ENCODE measurements at regions of chr17 and their contacts with region 1.

Region 1: DNA sequence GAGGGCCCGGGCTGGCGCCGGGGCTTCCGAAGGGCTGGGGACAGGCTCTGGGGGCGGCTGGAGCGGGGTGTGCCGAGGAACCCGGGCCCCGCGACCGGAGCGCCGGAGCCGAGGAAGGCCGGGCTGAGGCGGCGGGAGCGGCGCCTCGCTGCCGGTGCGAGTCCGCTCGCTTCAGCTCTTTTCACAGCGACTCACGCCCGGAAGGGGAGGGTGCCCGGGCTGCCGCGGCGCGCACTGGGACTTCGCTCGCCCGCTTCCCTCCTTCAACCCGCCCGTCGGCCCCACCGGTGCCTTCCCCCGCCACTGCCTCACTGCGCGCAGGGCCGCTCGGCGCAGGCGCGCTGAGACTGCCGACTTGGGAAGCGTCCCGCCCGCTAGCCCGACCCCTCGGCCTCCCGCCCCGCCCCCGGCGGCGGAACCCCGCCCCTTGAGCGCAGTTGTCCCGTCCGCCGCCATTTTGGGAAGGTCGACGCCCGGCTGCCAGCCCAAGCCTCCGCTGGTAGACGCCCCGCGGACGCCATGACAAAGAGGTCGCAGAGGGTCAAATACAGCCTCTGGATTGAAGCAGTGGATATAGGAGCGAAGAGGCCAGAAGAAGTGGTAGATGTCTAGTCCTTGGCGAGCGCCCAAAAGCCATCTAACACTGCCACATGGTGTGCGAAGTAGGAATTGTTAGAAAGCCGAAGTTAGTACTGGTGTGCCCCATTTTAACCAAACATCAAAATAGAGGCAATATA is at the start of gene UBE2G1:
- DNase-seq: peak; percentile 97
- H3K4me3 Mint-ChIP-seq: peak within 1 kb of the TSS; percentile 72
- H3K27ac Mint-ChIP-seq: peak within 1 kb of the TSS; percentile 86
- H3K4me1 Mint-ChIP-seq: peaks cover 30% of the 10 kb centered on the region
- H3K27me3 Mint-ChIP-seq: no peaks in the 10 kb centered on the region
- total RNA-seq, gene UBE2G1: 80.3 and 87.3 TPM in 2 replicates

Region 2: GRCh38 chr17:3845621-3846441 is 520.7 kb before region 1 on chr17 and contains the start of gene NCBP3:
- intact Hi-C with region 1: loop called (anchors 2 kb)
- DNase-seq: peak; percentile 90
- H3K4me3 Mint-ChIP-seq: peak within 1 kb of the TSS; percentile 97
- H3K27ac Mint-ChIP-seq: peak within 1 kb of the TSS; percentile 97
- H3K4me1 Mint-ChIP-seq: peaks cover 16% of the 10 kb centered on the region
- H3K27me3 Mint-ChIP-seq: peaks cover 9% of the 10 kb centered on the region
- total RNA-seq, gene NCBP3: 54.2 and 56.0 TPM in 2 replicates

Region 3: GRCh38 chr17:4263282-4264215 is 102.9 kb before region 1 on chr17 and contains the start of gene ANKFY1:
- intact Hi-C with region 1: loop called (anchors 1 kb)
- DNase-seq: peak; percentile 98
- H3K4me3 Mint-ChIP-seq: peak within 1 kb of the TSS; percentile 98
- H3K27ac Mint-ChIP-seq: peak within 1 kb of the TSS; percentile 95
- H3K4me1 Mint-ChIP-seq: peaks cover 37% of the 10 kb centered on the region
- H3K27me3 Mint-ChIP-seq: no peaks in the 10 kb centered on the region
- total RNA-seq, gene ANKFY1: 53.8 and 60.1 TPM in 2 replicates

Region 4: GRCh38 chr17:4394208-4395110 is 28.0 kb after region 1 on chr17:
- intact Hi-C with region 1: loop called (anchors 1 kb)
- DNase-seq: no peak
- H3K4me3 Mint-ChIP-seq: no peak overlapping the region
- H3K27ac Mint-ChIP-seq: no peak overlapping the region
- H3K4me1 Mint-ChIP-seq: peaks cover 25% of the 10 kb centered on the region
- H3K27me3 Mint-ChIP-seq: peaks cover 2% of the 10 kb centered on the region

Region 5: GRCh38 chr17:4554997-4555799 is 188.7 kb after region 1 on chr17 and contains the start of gene MYBBP1A:
- intact Hi-C with region 1: loop called (anchors 1 kb)
- DNase-seq: peak; percentile 96
- H3K4me3 Mint-ChIP-seq: peak within 1 kb of the TSS; percentile 94
- H3K27ac Mint-ChIP-seq: peak within 1 kb of the TSS; percentile 93
- H3K4me1 Mint-ChIP-seq: peaks cover 29% of the 10 kb centered on the region
- H3K27me3 Mint-ChIP-seq: no peaks in the 10 kb centered on the region
- total RNA-seq, gene MYBBP1A: 186 and 195 TPM in 2 replicates